Psoas muscle (tissue), 8 donors: ENCODE measurements at regions of chr2 and their contacts with region 1.

Region 1: DNA sequence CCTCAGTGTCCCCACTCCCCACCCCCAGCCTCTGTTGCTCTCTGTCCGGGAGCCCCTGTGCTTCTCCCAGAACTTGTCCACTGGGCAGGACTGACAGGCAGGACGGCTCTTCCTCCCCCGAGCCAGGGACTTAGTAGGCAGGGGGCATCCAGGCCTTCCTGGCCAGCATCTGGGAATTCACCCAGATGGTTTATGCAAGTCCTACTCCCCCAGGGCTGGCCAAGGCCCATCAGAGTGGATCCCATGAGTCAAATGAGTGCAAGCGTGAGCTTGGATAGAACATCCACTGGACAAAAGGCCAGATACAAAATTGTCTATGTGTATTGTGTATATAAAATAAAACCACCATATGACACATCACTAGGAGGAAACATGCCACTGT is 7.5 kb downstream of the NMUR1 start:
- DNase-seq: no peak
- ATAC-seq: no peak
- H3K4me3 ChIP-seq: no peak overlapping the region
- H3K27ac ChIP-seq: no peak overlapping the region
- H3K4me1 ChIP-seq: no peaks in the 10 kb centered on the region
- H3K27me3 ChIP-seq: no peaks in the 10 kb centered on the region
- CTCF ChIP-seq: no peak

Region 2: GRCh38 chr2:231590619-231591018 is 67.8 kb after region 1 on chr2:
- intact Hi-C with region 1: loop called in 1 of 2 experiments (anchors 5 kb)
- DNase-seq: no peak
- ATAC-seq: no peak
- H3K4me3 ChIP-seq: no peak overlapping the region
- H3K27ac ChIP-seq: no peak overlapping the region
- H3K4me1 ChIP-seq: no peaks in the 10 kb centered on the region
- H3K27me3 ChIP-seq: no peaks in the 10 kb centered on the region
- CTCF ChIP-seq: no peak

Region 3: DNA sequence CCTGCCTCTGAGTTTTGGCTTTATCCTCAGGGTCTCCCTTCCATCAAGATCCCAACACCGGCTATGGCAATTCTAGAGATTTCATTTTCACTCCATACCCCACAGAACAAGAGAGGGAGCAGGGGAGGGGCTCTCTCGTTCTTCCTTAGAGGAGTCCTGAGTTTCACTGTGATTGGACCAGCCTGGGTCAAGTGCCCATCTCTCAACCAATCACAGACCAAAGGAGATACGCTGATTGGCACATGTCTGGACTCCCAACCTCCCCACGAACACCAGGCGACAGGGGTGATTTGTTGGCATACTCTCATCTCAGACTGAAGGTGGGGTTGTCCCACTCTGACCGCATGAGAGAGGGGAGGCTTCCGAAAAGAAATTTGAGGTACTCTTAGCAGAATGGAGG is 338.7 kb after region 1 on chr2:
- intact Hi-C with region 1: no loop called
- DNase-seq: no peak
- ATAC-seq: no peak
- H3K4me3 ChIP-seq: no peak overlapping the region
- H3K27ac ChIP-seq: no peak overlapping the region
- H3K4me1 ChIP-seq: no peaks in the 10 kb centered on the region
- H3K27me3 ChIP-seq: peaks cover 0 to 10% (median under 1%) of the 10 kb centered on the region in 3 donors
- CTCF ChIP-seq: no peak